K562 (cell line): ENCODE measurements at regions of chr1 and their contacts with region 1.

Region 1: DNA sequence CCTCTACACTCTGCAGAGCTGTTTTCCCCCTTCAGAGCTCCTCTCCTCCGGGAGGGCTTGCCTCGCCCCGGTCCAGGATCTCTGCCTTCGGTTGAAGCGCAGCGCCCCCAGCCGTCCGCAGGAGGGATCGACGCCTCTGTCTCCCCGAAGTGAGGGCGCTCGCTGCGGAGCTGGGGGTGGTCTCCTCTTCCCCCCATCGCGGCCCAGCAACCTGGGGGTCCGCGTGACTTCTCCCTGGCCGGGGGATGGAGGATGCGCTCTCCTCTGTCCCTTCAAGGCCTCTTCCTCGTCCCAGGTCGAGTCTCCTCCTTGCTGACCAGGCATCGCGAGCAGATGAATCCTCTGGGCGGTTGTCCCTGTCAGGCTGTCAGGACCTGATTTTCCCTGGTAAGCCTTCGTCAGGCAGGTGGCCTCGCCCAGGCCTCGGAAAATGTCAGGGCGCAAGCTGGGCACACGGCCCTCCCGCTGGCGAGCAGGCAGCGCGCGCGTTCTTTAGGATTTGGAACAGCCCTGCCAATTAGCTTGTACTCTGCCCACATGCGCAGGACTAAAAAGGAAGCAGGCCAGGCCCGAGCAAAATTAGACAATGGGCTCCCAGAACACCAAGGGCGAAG is 90.5 kb downstream of the EDEM3 start:
- DNase-seq: peak; percentile 74 to 82 (median 78)
- ATAC-seq: peak; percentile 98
- H3K4me3 ChIP-seq: no peak overlapping the region
- H3K27ac ChIP-seq: no peak overlapping the region
- H3K4me1 ChIP-seq: peaks cover 0 to 10% of the 10 kb centered on the region in 2 experiments; a peak in 2 of 5 replicates
- H3K27me3 ChIP-seq: peaks cover 6 to 10% of the 10 kb centered on the region in 2 experiments; a peak in 4 of 5 replicates
- CTCF ChIP-seq: peak; percentile 85 to 94 (median 91)
- EP300 ChIP-seq: no peak
- POLR2A ChIP-seq: no peak
- RAD21 ChIP-seq: peak; percentile 75 to 90

Region 2: GRCh38 chr1:183915625-183916510 is 748.3 kb before region 1 on chr1:
- CTCF ChIA-PET with region 1: no interaction called
- POLR2A ChIA-PET with region 1: no interaction called
- in situ Hi-C with region 1: no loop called
- intact Hi-C with region 1: loop called (anchors 10 kb)
- DNase-seq: peak; percentile 78 to 90 (median 82)
- ATAC-seq: peak; percentile 93
- H3K4me3 ChIP-seq: no peak overlapping the region
- H3K27ac ChIP-seq: no peak overlapping the region
- H3K4me1 ChIP-seq: peaks cover 0 to 5% of the 10 kb centered on the region in 2 experiments; a peak in 2 of 5 replicates
- H3K27me3 ChIP-seq: peaks cover 0 to 10% of the 10 kb centered on the region in 2 experiments; a peak in 2 of 5 replicates
- CTCF ChIP-seq: peak; percentile 86 to 96 (median 89)
- EP300 ChIP-seq: peak; percentile 45
- POLR2A ChIP-seq: no peak
- RAD21 ChIP-seq: peak; percentile 91 to 95

Region 3: DNA sequence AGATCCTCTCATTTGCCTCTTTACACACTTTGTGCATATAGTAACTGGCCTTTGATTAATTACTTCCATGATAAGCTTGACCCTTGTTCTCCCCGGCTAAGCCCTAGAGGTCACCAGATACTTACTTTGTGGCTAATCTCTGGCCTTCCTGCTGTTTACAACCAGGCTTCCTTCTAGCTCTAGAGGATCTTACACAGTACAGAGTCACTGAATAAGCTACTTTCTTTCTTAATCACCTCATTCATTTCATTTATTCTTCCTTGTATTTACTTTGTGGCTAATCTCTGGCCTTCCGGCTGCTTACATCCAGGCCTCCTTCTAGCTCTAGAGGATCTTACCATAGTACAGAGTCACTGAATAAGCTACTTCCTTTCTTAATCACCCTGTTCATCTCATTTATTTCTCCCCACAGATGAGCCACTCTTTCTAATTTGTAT is 421.6 kb before region 1 on chr1:
- CTCF ChIA-PET with region 1: no interaction called
- POLR2A ChIA-PET with region 1: no interaction called
- in situ Hi-C with region 1: no loop called
- intact Hi-C with region 1: loop called (anchors 10 kb)
- DNase-seq: no peak
- ATAC-seq: peak; percentile 69
- H3K4me3 ChIP-seq: no peak overlapping the region
- H3K27ac ChIP-seq: no peak overlapping the region
- H3K4me1 ChIP-seq: no peaks in the 10 kb centered on the region; a peak in 1 of 5 replicates
- H3K27me3 ChIP-seq: no peaks in the 10 kb centered on the region
- CTCF ChIP-seq: peak in 1 of 3 experiments; percentile 33; a peak in 2 of 6 replicates
- EP300 ChIP-seq: no peak
- POLR2A ChIP-seq: no peak
- RAD21 ChIP-seq: peak; percentile 48 to 50

Region 4: DNA sequence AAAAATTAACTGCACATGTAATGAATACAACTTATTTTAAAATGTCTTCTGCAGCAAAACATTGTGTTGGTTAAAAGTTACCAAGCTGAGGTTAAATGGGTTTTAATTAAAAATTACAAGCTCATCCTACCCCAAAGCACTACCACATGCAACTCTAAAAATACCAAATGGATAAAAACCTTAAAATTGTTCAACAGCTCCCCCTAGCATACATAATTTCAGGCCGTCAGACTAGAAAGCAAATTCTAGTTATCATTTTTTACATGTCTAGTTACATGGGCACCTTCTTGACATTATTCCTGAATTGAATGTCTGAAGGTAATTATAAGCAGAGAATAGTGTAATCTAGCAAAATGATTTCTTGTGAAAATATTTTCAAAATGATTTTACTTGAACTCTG is 100.8 kb before region 1 on chr1:
- CTCF ChIA-PET with region 1: no interaction called
- POLR2A ChIA-PET with region 1: no interaction called
- in situ Hi-C with region 1: no loop called
- intact Hi-C with region 1: loop called (anchors 5 kb)
- DNase-seq: peak in 1 of 4 experiments; percentile 9
- ATAC-seq: no peak
- H3K4me3 ChIP-seq: no peak overlapping the region
- H3K27ac ChIP-seq: no peak overlapping the region
- H3K4me1 ChIP-seq: no peaks in the 10 kb centered on the region
- H3K27me3 ChIP-seq: no peaks in the 10 kb centered on the region; a peak in 2 of 5 replicates
- CTCF ChIP-seq: peak in 2 of 3 experiments; percentile 39 to 56; a peak in 3 of 6 replicates
- EP300 ChIP-seq: no peak
- POLR2A ChIP-seq: no peak
- RAD21 ChIP-seq: peak; percentile 40 to 65

Region 5: GRCh38 chr1:184684285-184685074 is 20.3 kb after region 1 on chr1:
- CTCF ChIA-PET with region 1: interaction called, 3 read pairs
- POLR2A ChIA-PET with region 1: no interaction called
- in situ Hi-C with region 1: no loop called
- intact Hi-C with region 1: loop called (anchors 2 kb)
- DNase-seq: no peak
- ATAC-seq: peak; percentile 13; the same call in 2 of the 3 replicates
- H3K4me3 ChIP-seq: no peak overlapping the region
- H3K27ac ChIP-seq: no peak overlapping the region
- H3K4me1 ChIP-seq: 0 out of 5 replicates have a peak, but pooled peaks cover 0 to 2% of the 10 kb centered on the region in 2 experiments
- H3K27me3 ChIP-seq: peaks cover 6 to 15% of the 10 kb centered on the region in 2 experiments; a peak in 4 of 5 replicates
- CTCF ChIP-seq: no peak
- EP300 ChIP-seq: no peak
- POLR2A ChIP-seq: no peak
- RAD21 ChIP-seq: no peak